HCT116 (cell line): ENCODE measurements at regions of chr1 and their contacts with region 1.

Region 1: GRCh38 chr1:226608699-226609505 is 60.3 kb downstream of the STUM start:
- DNase-seq: peak; percentile 51
- ATAC-seq: peak; percentile 91
- H3K4me3 ChIP-seq: no peak overlapping the region
- H3K27ac ChIP-seq: no peak overlapping the region
- H3K4me1 ChIP-seq: no peaks in the 10 kb centered on the region
- H3K27me3 ChIP-seq: no peaks in the 10 kb centered on the region; the same call in 1 of the 2 replicates
- CTCF ChIP-seq: peak; percentile 77 to 93 (median 88); a peak in 5 of 6 replicates
- POLR2A ChIP-seq: no peak
- RAD21 ChIP-seq: peak; percentile 69

Region 2: DNA sequence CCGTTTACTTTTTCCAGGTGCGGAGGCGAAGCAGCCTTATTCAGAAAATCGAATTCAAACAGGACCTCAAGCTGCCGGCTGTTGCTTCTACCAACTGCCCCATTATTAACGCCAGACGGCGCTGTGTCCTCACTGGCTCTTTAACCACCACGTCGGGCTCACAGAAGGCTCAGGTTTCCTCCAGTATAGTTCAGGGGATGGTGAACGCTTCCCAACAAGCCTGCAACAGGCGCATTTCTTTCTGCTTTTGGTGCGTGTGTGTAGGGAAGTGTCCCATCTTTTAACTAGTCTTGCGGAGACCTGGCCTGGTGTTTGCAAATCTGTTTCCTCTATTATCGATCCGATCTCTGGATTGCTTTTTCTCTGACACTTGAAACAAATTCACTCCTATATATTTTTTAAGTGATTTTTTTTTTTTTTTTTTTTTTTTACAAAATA is 61.1 kb before region 1 on chr1:
- CTCF ChIA-PET with region 1: interaction called, 9 read pairs
- POLR2A ChIA-PET with region 1: no interaction called
- RAD21 ChIA-PET with region 1: interaction called in 1 of 2 experiments, 3 read pairs
- intact Hi-C with region 1: loop called (anchors 1 kb)
- DNase-seq: peak; percentile 79
- ATAC-seq: peak; percentile 96
- H3K4me3 ChIP-seq: no peak overlapping the region
- H3K27ac ChIP-seq: no peak overlapping the region
- H3K4me1 ChIP-seq: peaks cover 0 to 21% of the 10 kb centered on the region in 2 experiments; a peak in 2 of 4 replicates
- H3K27me3 ChIP-seq: peaks cover 3% of the 10 kb centered on the region; the same call in 1 of the 2 replicates
- CTCF ChIP-seq: peak; percentile 91 to 98 (median 97)
- POLR2A ChIP-seq: no peak
- RAD21 ChIP-seq: peak; percentile 91

Region 3: GRCh38 chr1:226569879-226570547 is 38.9 kb before region 1 on chr1:
- CTCF ChIA-PET with region 1: interaction called, 12 read pairs
- POLR2A ChIA-PET with region 1: no interaction called
- RAD21 ChIA-PET with region 1: no interaction called
- intact Hi-C with region 1: no loop called
- DNase-seq: peak; percentile 27
- ATAC-seq: peak; percentile 97
- H3K4me3 ChIP-seq: no peak overlapping the region
- H3K27ac ChIP-seq: no peak overlapping the region
- H3K4me1 ChIP-seq: no peaks in the 10 kb centered on the region
- H3K27me3 ChIP-seq: no peaks in the 10 kb centered on the region
- CTCF ChIP-seq: peak in 2 of 3 experiments; percentile 62 to 68; a peak in 4 of 6 replicates
- POLR2A ChIP-seq: no peak
- RAD21 ChIP-seq: no peak